Natural killer cell (primary cell): ENCODE measurements at regions of chr2 and their contacts with region 1.

Region 1: DNA sequence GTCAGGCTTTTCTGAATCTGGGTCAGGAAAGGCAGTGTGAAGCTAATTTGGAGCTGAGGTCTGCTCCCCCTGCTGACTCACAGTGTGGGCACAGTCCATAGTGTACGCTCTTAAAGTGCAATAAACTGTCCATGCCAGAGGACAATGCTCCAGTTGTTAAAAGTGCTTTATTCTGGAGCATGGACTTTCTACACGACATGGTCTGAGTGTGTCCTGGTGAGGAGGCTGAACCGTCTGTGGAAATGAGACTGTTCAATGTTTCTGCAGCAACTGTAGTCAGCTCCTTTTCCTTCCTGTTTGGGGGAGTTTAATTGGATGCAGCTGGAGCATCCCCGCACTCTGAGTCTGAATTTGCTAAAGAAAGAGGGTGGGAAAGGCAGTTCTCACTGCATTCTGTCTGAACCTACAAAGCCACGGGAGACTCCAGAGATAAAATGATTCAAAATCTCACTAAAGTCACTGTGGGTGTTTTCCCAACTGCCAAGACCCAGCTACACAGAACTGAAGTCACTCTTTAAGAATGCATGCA is 110.2 kb upstream of the TRIB2 start:
- DNase-seq: peak in 1 of 2 donors; percentile 41
- ATAC-seq: peak in 2 of 3 donors; percentile 53 to 81
- H3K4me3 ChIP-seq: no peak overlapping the region
- H3K4me3 Mint-ChIP-seq: no peak overlapping the region
- H3K27ac ChIP-seq: no peak overlapping the region
- H3K27ac Mint-ChIP-seq: no peak overlapping the region
- H3K4me1 ChIP-seq: no peaks in the 10 kb centered on the region
- H3K4me1 Mint-ChIP-seq: peaks cover 0 to 13% of the 10 kb centered on the region in 2 donors
- H3K27me3 ChIP-seq: no peaks in the 10 kb centered on the region
- H3K27me3 Mint-ChIP-seq: peaks cover 8 to 10% of the 10 kb centered on the region in 2 donors
- CTCF ChIP-seq: no peak

Region 2: GRCh38 chr2:12416600-12416999 is 189.9 kb before region 1 on chr2:
- intact Hi-C with region 1: loop called (anchors 10 kb)
- DNase-seq: peak; percentile 36 to 80
- ATAC-seq: peak; percentile 48 to 73 (median 59)
- H3K4me3 ChIP-seq: no peak overlapping the region
- H3K4me3 Mint-ChIP-seq: peak overlapping the region; percentile 47
- H3K27ac ChIP-seq: no peak overlapping the region
- H3K27ac Mint-ChIP-seq: peak overlapping the region in 1 of 2 donors; percentile 8
- H3K4me1 ChIP-seq: peaks cover 7% of the 10 kb centered on the region
- H3K4me1 Mint-ChIP-seq: peaks cover 29 to 40% of the 10 kb centered on the region in 2 donors
- H3K27me3 ChIP-seq: no peaks in the 10 kb centered on the region
- H3K27me3 Mint-ChIP-seq: no peaks in the 10 kb centered on the region
- CTCF ChIP-seq: peak; percentile 65

Region 3: DNA sequence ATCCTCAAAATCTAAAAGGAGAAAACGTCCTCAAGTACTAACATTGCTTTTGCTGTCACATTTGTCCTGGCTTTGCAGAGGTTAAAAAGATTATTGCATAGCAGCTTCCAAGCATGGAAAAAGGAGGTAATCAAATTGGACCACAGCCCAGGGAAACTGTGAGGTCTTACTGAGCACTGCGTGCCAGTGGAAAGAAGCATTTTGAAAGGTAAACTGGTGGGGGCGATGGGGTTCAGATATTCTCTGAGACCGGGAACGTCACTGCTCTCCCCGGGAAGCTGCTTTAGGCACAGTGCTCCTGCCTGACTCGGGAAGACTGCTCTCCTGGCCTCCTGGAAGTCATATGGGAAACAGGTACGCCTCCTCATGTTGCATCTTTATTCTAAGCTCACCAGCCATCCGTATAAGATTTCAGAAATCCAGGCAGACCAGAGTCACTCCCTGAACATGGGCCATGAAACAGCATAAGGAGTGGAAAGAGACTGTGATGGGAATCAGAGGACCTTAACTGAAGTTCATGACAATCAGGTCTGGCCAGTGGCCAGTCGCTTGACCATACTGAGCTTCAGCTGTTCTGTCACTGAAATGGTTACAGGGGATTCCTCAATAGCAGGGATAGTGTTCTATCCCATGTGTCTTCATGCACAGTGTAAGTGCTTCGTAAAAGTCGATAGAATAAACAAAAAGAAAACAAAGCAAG is 394.3 kb after region 1 on chr2:
- intact Hi-C with region 1: no loop called
- DNase-seq: no peak
- ATAC-seq: no peak
- H3K4me3 ChIP-seq: no peak overlapping the region
- H3K4me3 Mint-ChIP-seq: no peak overlapping the region
- H3K27ac ChIP-seq: no peak overlapping the region
- H3K27ac Mint-ChIP-seq: no peak overlapping the region
- H3K4me1 ChIP-seq: no peaks in the 10 kb centered on the region
- H3K4me1 Mint-ChIP-seq: peaks cover 0 to 6% of the 10 kb centered on the region in 2 donors
- H3K27me3 ChIP-seq: no peaks in the 10 kb centered on the region
- H3K27me3 Mint-ChIP-seq: no peaks in the 10 kb centered on the region
- CTCF ChIP-seq: no peak